CD4-positive, alpha-beta T cell (primary cell): ENCODE measurements at regions of chr20 and their contacts with region 1.

Region 1: GRCh38 chr20:35726759-35727711 is 15.0 kb downstream of the RBM39 start:
- DNase-seq: no peak
- ATAC-seq: no peak
- H3K4me3 ChIP-seq: no peak overlapping the region
- H3K4me3 Mint-ChIP-seq: no peak overlapping the region
- H3K27ac ChIP-seq: no peak overlapping the region
- H3K27ac Mint-ChIP-seq: peak overlapping the region; percentile 20
- H3K4me1 ChIP-seq: peaks cover 26% of the 10 kb centered on the region
- H3K4me1 Mint-ChIP-seq: peaks cover 46% of the 10 kb centered on the region
- H3K27me3 ChIP-seq: no peaks in the 10 kb centered on the region
- H3K27me3 Mint-ChIP-seq: no peaks in the 10 kb centered on the region
- CTCF ChIP-seq: no peak

Region 2: DNA sequence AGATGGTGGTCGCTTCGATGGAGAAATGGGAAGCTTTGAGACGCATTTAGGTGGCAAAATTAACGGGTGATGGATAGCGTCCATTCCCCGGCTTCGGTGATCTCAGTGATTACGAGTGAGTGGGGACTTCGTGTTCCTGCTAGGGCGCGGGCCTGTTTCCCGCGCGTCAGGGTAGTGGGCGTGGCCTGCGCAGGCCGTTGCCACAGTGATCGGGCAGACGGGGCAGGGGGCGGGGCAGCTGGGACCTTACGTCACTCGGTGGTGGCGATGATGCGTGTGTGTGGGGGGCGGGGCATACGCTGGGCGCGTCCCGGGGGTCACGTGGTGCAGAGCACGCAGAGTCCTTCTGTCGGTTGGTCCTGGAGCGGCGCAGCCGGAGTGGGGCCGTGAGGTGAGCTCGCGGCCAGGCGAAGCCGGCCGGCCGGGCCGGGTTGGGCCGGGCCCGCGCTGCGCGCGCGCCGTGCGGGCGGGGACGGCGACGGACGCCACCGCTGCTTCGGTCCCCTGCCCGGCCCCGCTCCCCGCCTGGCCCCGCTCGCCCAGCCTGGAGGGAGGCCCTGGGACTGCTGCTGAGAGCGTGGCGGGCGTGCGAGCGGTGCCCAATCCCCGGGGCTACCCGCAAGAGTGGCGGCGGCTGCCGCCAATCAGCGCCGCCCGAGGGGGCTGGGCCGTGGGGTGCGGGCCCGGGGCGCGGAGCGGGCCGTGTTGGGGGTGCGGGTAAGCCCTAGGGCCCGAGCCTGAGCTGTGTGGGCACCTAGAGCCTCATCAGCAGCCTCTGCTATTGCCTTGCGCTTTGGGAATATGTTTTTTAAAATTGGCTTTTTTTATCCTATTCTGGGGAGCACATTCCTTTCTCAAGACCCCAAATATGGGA is 44.9 kb after region 1 on chr20 and contains the start of gene PHF20:
- CTCF ChIA-PET with region 1: no interaction called
- POLR2A ChIA-PET with region 1: interaction called, 6 read pairs
- intact Hi-C with region 1: loop called in 1 of 2 experiments (anchors 10 kb)
- DNase-seq: peak; percentile 100
- ATAC-seq: peak; percentile 84
- H3K4me3 ChIP-seq: peak within 1 kb of the TSS; percentile 79
- H3K4me3 Mint-ChIP-seq: peak within 1 kb of the TSS; percentile 97
- H3K27ac ChIP-seq: peak within 1 kb of the TSS; percentile 86 to 96
- H3K27ac Mint-ChIP-seq: peak within 1 kb of the TSS; percentile 96
- H3K4me1 ChIP-seq: peaks cover 84% of the 10 kb centered on the region
- H3K4me1 Mint-ChIP-seq: peaks cover 75% of the 10 kb centered on the region
- H3K27me3 ChIP-seq: no peaks in the 10 kb centered on the region
- H3K27me3 Mint-ChIP-seq: no peaks in the 10 kb centered on the region
- CTCF ChIP-seq: no peak
- total RNA-seq, gene PHF20: 119 to 126 TPM

Region 3: DNA sequence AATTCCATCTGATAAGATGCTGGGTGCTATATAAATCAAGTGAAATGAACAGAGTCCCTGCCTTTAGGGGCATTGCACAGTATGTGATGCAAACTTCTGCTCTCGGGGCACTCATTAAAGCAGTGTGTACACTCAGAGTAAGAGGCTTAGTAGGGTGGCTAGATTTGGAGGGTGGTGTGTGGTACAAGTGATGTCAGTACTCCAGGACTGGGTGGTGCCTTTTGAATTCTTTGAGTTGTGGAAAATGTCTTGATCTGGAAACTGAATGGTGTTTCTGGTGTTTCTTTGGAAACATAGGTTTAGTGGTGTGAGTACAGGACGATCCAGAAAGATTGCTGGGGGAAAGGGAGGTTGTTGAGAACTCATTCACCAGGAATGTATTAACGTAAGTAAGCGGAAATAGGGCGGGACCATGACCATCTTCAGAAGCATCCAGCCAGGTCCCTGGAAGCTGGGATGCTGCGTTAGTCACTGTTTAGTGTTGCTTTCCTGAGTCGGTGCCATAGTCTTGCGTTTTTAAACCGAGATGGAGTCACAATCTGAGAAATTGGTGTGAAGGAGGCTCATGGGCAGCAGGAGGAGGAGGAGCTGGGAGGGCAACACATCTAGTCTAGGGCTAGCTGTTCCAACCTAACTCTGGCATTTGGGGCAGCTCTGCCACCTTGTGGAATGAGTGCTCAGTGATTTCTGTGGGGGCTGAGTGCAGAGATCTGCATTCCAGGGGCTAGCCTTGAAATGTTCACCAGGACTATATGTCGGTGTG is 156.9 kb after region 1 on chr20:
- CTCF ChIA-PET with region 1: interaction called, 3 read pairs
- POLR2A ChIA-PET with region 1: no interaction called
- intact Hi-C with region 1: loop called in 1 of 2 experiments (anchors 5 kb)
- DNase-seq: peak; percentile 35 to 75 (median 52)
- ATAC-seq: peak; percentile 91
- H3K4me3 ChIP-seq: no peak overlapping the region
- H3K4me3 Mint-ChIP-seq: no peak overlapping the region
- H3K27ac ChIP-seq: no peak overlapping the region
- H3K27ac Mint-ChIP-seq: peak overlapping the region; percentile 43
- H3K4me1 ChIP-seq: peaks cover 5% of the 10 kb centered on the region
- H3K4me1 Mint-ChIP-seq: peaks cover 16% of the 10 kb centered on the region
- H3K27me3 ChIP-seq: no peaks in the 10 kb centered on the region
- H3K27me3 Mint-ChIP-seq: no peaks in the 10 kb centered on the region
- CTCF ChIP-seq: peak; percentile 77

Region 4: GRCh38 chr20:36895036-36895435 is 1168.0 kb after region 1 on chr20:
- CTCF ChIA-PET with region 1: no interaction called
- POLR2A ChIA-PET with region 1: no interaction called
- intact Hi-C with region 1: loop called in 1 of 2 experiments (anchors 10 kb)
- DNase-seq: no peak
- ATAC-seq: peak; percentile 47
- H3K4me3 ChIP-seq: no peak overlapping the region
- H3K4me3 Mint-ChIP-seq: no peak overlapping the region
- H3K27ac ChIP-seq: no peak overlapping the region
- H3K27ac Mint-ChIP-seq: peak overlapping the region; percentile 62
- H3K4me1 ChIP-seq: no peaks in the 10 kb centered on the region
- H3K4me1 Mint-ChIP-seq: peaks cover 16% of the 10 kb centered on the region
- H3K27me3 ChIP-seq: no peaks in the 10 kb centered on the region
- H3K27me3 Mint-ChIP-seq: no peaks in the 10 kb centered on the region
- CTCF ChIP-seq: no peak